Prostate gland (tissue), 2 donors: ENCODE measurements at regions of chr2 and their contacts with region 1.

Region 1: DNA sequence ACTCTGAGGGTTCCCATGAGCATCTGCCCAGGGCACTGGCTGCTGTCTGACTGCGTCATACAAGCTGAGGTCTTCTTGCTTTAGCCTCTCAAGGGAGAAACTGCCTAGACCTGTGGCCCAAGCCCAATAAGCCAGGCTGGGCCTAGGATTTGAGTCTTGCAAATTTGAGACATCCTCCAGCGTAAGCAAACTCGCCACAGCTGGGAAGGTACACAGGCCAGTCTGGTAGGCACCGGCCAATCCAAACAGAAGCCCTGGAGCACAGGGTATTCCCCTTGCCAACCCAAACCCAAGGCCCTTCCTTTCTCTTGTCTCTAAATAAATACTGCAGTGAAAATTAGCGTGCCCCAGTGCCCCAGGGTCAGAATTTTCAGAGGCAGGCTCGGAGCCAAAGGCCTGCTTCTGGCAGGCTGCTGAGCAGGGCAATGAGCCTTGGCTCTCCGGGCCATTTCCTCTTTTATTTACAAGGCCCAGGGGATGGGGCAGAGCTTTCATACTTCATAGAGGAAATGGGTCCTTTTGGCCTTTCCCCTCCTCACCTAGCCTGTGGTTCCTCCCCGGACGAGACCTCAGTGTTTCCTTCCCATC is 33.3 kb downstream of the POLR1A start:
- DNase-seq: peak; percentile 78
- H3K4me3 ChIP-seq: no peak overlapping the region
- H3K27ac ChIP-seq: peak overlapping the region; percentile 6 to 32
- H3K4me1 ChIP-seq: peaks cover 11% of the 10 kb centered on the region
- H3K27me3 ChIP-seq: no peaks in the 10 kb centered on the region
- CTCF ChIP-seq: no peak
- POLR2A ChIP-seq: no peak

Region 2: DNA sequence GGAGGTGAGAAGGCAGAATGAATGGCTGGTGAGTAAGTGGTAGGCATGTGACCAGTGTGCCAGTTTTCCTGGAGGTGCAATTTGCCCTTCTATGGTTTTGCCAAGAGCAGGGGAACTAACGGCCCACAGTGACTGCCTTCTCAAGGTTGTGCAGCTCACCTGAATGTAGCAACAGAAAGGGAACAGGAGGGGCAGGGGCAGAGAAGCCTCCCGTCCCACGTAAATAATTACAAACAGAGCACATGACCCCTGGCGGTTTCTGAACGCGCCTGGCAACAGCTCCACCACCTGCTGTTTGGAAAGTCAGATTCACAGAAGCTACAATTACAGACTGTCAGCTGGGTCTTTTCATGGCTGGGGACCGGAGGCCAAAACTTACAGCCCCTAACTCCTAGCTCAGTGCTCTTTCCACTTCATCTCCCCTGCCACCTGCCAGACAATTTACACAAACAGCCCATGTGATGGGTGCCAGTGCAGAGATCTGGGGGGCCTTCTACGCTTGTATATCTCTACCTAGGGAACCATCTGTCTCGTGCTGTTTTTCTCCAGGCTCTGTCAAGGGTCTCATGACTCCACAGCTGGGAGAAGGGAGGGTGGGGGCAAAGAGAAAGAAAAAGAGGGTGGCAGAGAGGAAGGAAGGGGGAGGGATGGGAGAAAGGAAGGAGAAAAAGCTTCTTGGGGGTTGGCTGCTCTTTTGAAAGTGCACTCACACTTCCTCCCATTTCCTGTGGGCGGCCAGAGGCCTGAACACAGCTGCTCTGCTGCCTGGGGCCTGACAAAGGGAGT is 36.3 kb before region 1 on chr2:
- intact Hi-C with region 1: loop called (anchors 5 kb)
- DNase-seq: peak; percentile 76
- H3K4me3 ChIP-seq: no peak overlapping the region
- H3K27ac ChIP-seq: peak overlapping the region; percentile 69 to 73
- H3K4me1 ChIP-seq: no peaks in the 10 kb centered on the region
- H3K27me3 ChIP-seq: no peaks in the 10 kb centered on the region
- CTCF ChIP-seq: peak in 2 of 4 experiments; percentile 53 to 57
- POLR2A ChIP-seq: no peak